Prostate gland (tissue), 2 donors: ENCODE measurements at regions of chr9 and their contacts with region 1.

Region 1: GRCh38 chr9:120714088-120714845 is at the start of gene MEGF9:
- DNase-seq: peak; percentile 99
- H3K4me3 ChIP-seq: peak within 1 kb of the TSS; percentile 83
- H3K27ac ChIP-seq: peak within 1 kb of the TSS; percentile 75 to 85
- H3K4me1 ChIP-seq: no peaks in the 10 kb centered on the region
- H3K27me3 ChIP-seq: no peaks in the 10 kb centered on the region
- CTCF ChIP-seq: peak in 2 of 4 experiments; percentile 11 to 28
- POLR2A ChIP-seq: peak; percentile 95
- total RNA-seq, gene MEGF9: 12.0 to 25.3 TPM

Region 2: GRCh38 chr9:120524863-120525262 is 189.4 kb before region 1 on chr9:
- intact Hi-C with region 1: no loop called
- DNase-seq: no peak
- H3K4me3 ChIP-seq: no peak overlapping the region
- H3K27ac ChIP-seq: no peak overlapping the region
- H3K4me1 ChIP-seq: no peaks in the 10 kb centered on the region
- H3K27me3 ChIP-seq: no peaks in the 10 kb centered on the region
- CTCF ChIP-seq: no peak
- POLR2A ChIP-seq: no peak

Region 3: GRCh38 chr9:120792898-120793765 is 78.9 kb after region 1 on chr9 and contains the start of gene FBXW2:
- intact Hi-C with region 1: loop called (anchors 10 kb)
- DNase-seq: peak; percentile 89
- H3K4me3 ChIP-seq: peak within 1 kb of the TSS; percentile 73 to 97
- H3K27ac ChIP-seq: peak within 1 kb of the TSS; percentile 79 to 88
- H3K4me1 ChIP-seq: no peaks in the 10 kb centered on the region
- H3K27me3 ChIP-seq: no peaks in the 10 kb centered on the region
- CTCF ChIP-seq: peak in 2 of 4 experiments; percentile 40 to 47
- POLR2A ChIP-seq: peak; percentile 81
- total RNA-seq, gene FBXW2: 38.3 to 57.1 TPM

Region 4: GRCh38 chr9:120928483-120929228 is 214.4 kb after region 1 on chr9:
- intact Hi-C with region 1: loop called (anchors 10 kb)
- DNase-seq: peak; percentile 65
- H3K4me3 ChIP-seq: peak overlapping the region; percentile 67 to 85
- H3K27ac ChIP-seq: peak overlapping the region; percentile 83 to 89
- H3K4me1 ChIP-seq: no peaks in the 10 kb centered on the region
- H3K27me3 ChIP-seq: no peaks in the 10 kb centered on the region
- CTCF ChIP-seq: peak in 1 of 4 experiments; percentile 39
- POLR2A ChIP-seq: no peak